ENCODE measurements at regions of chr16 and their contacts with region 1.

Region 1: GRCh38 chr16:72066747-72067146 is 3.7 kb downstream of the HPR start:
- DNase-seq: no peak
- ATAC-seq: no peak
- H3K4me3 Mint-ChIP-seq: no peak overlapping the region
- H3K27ac Mint-ChIP-seq: no peak overlapping the region
- H3K4me1 Mint-ChIP-seq: no peaks in the 10 kb centered on the region
- H3K27me3 Mint-ChIP-seq: no peaks in the 10 kb centered on the region

Region 2: DNA sequence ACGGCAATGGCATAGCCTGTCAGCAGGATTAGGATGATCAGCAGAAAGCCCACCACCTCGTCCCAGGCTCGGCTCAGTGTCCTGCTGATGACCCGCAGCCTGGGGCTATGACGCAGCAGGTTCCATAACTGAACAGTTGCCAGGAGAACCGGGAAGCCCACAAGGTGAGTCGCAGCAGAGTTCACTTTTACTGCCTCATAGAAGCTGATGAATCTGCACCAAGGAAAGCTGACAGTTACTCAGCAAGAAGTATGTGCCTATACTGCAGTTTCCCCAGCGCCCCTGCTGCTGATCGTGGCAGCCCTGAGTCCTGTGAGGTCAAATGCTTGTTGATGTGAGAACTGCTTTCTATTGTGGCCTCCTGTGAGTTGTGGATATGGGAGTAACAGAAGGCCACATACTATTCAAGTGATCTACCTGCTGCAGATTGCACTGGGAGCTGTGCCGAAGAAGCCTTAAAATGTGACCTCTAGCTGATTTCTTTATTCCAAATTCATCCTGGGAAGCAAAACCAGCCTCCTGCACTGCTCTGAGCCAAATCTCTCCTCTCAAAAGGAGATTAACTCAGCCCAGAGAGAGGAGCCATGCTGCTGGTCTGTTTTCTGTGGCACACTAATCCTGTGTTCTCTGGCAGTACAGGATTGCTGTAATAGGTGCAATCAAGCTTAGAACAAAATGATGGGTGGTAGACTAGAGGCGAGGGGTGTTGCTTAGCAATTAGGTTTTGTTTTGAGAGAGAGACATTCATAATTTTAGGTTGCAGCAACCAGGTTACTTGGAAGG is 132.6 kb before region 1 on chr16:
- CTCF ChIA-PET with region 1: no interaction called
- POLR2A ChIA-PET with region 1: no interaction called
- intact Hi-C with region 1: no loop called
- DNase-seq: no peak
- ATAC-seq: peak; percentile 9
- H3K4me3 Mint-ChIP-seq: no peak overlapping the region
- H3K27ac Mint-ChIP-seq: peak overlapping the region; percentile 25
- H3K4me1 Mint-ChIP-seq: peaks cover 10% of the 10 kb centered on the region
- H3K27me3 Mint-ChIP-seq: no peaks in the 10 kb centered on the region

Region 3: GRCh38 chr16:72099377-72099818 is 32.7 kb after region 1 on chr16:
- CTCF ChIA-PET with region 1: interaction called, 5 read pairs
- POLR2A ChIA-PET with region 1: no interaction called
- intact Hi-C with region 1: loop called (anchors 1 kb)
- DNase-seq: peak; percentile 64
- ATAC-seq: peak; percentile 96
- H3K4me3 Mint-ChIP-seq: no peak overlapping the region
- H3K27ac Mint-ChIP-seq: no peak overlapping the region
- H3K4me1 Mint-ChIP-seq: peaks cover 20% of the 10 kb centered on the region
- H3K27me3 Mint-ChIP-seq: no peaks in the 10 kb centered on the region

Region 4: GRCh38 chr16:73956587-73957494 is 1890.1 kb after region 1 on chr16:
- CTCF ChIA-PET with region 1: no interaction called
- POLR2A ChIA-PET with region 1: no interaction called
- intact Hi-C with region 1: loop called in 1 of 2 experiments (anchors 10 kb)
- DNase-seq: peak; percentile 62
- ATAC-seq: no peak
- H3K4me3 Mint-ChIP-seq: no peak overlapping the region
- H3K27ac Mint-ChIP-seq: no peak overlapping the region
- H3K4me1 Mint-ChIP-seq: no peaks in the 10 kb centered on the region
- H3K27me3 Mint-ChIP-seq: peaks cover 5% of the 10 kb centered on the region

Measured in activated CD4-positive, alpha-beta T cell treated with anti-CD3 and anti-CD28 coated beads for 36 hours (primary cell).